ENCODE measurements at regions of chr7 and their contacts with region 1.

Region 1: GRCh38 chr7:131107337-131108211 is 220.1 kb upstream of the MKLN1 start:
- DNase-seq: peak; percentile 92
- H3K4me3 ChIP-seq: peak overlapping the region; percentile 61 to 79 (median 63)
- H3K27ac ChIP-seq: peak overlapping the region; percentile 98
- H3K4me1 ChIP-seq: peaks cover 41% of the 10 kb centered on the region
- H3K27me3 ChIP-seq: no peaks in the 10 kb centered on the region
- CTCF ChIP-seq: no peak
- POLR2A ChIP-seq: no peak

Region 2: DNA sequence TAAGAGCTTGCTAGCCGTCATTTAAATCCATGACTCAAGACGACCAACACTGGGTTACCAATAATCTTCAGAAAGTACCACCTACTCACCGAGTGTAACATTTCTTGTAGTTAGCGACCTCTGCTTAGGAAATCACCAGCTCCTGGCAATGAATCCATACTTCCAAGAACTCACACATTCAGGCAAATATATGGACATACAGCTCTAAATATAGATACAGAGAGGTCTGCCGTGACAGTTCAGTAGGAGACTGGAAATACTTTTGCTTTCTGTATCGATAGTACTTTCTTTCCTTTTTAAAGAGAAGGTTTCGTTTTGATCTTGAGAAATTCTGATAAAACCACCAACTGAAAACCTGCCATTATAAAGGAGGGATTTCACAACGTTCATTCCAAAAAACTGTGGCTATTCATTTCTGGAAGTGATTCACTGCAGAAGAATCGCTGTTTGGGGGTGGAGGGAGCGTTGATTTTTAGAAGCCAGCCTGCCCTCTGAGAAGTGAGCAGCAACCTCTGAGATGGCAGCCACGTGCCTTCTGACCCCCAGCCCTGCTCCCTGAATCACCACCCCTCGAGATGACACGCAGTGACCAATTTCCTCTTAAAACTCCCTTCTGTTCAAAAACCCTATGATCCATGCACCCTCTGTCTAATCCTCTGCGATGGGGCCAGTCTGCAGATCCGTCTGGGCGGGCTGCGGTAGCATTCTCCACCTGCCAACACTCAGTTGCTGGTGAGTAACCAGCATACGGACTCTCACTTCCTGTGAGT is 194.5 kb before region 1 on chr7:
- CTCF ChIA-PET with region 1: no interaction called
- POLR2A ChIA-PET with region 1: no interaction called
- dilution Hi-C with region 1: no loop called
- intact Hi-C with region 1: loop called (anchors 5 kb)
- DNase-seq: peak; percentile 97
- H3K4me3 ChIP-seq: peak overlapping the region; percentile 51 to 99 (median 88)
- H3K27ac ChIP-seq: peak overlapping the region; percentile 100
- H3K4me1 ChIP-seq: peaks cover 60% of the 10 kb centered on the region
- H3K27me3 ChIP-seq: no peaks in the 10 kb centered on the region
- CTCF ChIP-seq: no peak
- POLR2A ChIP-seq: peak; percentile 48

Region 3: DNA sequence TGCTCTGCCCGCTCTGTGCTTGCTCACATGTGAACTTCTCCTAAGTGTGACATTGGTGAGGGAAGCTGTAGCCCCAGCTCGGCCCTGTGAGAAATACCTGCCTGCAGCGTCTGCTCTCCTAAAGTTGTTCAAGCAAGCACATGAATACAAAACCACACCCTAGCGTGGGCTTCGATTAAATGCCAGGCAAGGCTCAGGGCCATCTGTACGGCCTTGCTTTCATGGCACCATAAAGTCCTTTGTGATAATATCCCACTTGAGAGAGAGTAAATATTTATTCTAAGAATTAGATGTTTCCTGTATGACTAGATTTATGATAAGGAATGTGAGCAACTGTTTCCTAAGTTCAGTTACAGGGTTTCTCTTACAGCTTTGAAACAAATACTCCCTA is 110.7 kb before region 1 on chr7:
- CTCF ChIA-PET with region 1: no interaction called
- POLR2A ChIA-PET with region 1: no interaction called
- dilution Hi-C with region 1: no loop called
- intact Hi-C with region 1: no loop called
- DNase-seq: peak; percentile 78
- H3K4me3 ChIP-seq: no peak overlapping the region
- H3K27ac ChIP-seq: no peak overlapping the region
- H3K4me1 ChIP-seq: peaks cover 14% of the 10 kb centered on the region
- H3K27me3 ChIP-seq: peaks cover 14 to 26% of the 10 kb centered on the region in 2 experiments
- CTCF ChIP-seq: no peak
- POLR2A ChIP-seq: no peak

Region 4: DNA sequence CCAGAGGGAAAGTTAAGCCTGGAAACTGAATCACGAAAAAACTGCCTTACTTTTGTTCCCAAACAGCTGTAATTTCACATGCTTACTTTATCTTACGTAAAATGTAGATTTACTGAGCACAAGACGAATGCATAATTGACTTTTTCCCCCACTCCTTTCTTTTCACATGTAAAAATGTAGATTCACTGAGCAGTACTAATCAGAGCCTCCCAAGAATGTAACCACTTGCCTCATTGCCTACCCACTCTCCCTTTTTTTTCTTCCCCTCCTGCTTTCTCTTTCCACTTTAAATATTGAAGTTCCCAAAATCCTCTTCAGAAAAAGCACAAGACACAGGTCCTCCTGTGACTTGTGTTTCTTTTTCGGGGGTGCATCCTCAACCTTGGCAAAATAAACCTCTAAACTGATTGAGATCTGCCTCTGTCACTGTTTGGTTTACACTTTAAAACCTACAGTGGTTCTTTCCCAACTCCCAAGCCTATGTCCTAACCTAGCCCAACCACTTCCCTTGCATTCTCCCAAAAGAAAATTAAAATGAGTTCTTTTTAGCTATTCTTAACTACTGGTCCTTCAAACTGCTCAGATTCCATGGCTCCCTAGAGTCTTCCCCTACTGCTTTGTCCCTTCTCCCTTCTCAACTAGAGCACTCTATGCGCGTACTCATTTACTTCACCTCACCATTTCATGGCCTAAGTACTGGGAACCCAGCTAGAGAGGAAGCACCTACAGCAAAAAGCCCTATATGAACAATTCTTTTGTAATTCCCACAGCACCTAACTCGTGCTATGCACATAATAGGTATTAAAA is 16.5 kb before region 1 on chr7:
- CTCF ChIA-PET with region 1: no interaction called
- POLR2A ChIA-PET with region 1: no interaction called
- dilution Hi-C with region 1: no loop called
- intact Hi-C with region 1: no loop called
- DNase-seq: no peak
- H3K4me3 ChIP-seq: no peak overlapping the region
- H3K27ac ChIP-seq: no peak overlapping the region
- H3K4me1 ChIP-seq: no peaks in the 10 kb centered on the region
- H3K27me3 ChIP-seq: no peaks in the 10 kb centered on the region
- CTCF ChIP-seq: no peak
- POLR2A ChIP-seq: no peak

Region 5: GRCh38 chr7:131255242-131255641 is 147.7 kb after region 1 on chr7:
- CTCF ChIA-PET with region 1: no interaction called
- POLR2A ChIA-PET with region 1: no interaction called
- dilution Hi-C with region 1: no loop called
- intact Hi-C with region 1: no loop called
- DNase-seq: no peak
- H3K4me3 ChIP-seq: no peak overlapping the region
- H3K27ac ChIP-seq: no peak overlapping the region
- H3K4me1 ChIP-seq: peaks cover 8% of the 10 kb centered on the region
- H3K27me3 ChIP-seq: peaks cover 3% of the 10 kb centered on the region in 2 experiments
- CTCF ChIP-seq: no peak
- POLR2A ChIP-seq: no peak

Region 6: DNA sequence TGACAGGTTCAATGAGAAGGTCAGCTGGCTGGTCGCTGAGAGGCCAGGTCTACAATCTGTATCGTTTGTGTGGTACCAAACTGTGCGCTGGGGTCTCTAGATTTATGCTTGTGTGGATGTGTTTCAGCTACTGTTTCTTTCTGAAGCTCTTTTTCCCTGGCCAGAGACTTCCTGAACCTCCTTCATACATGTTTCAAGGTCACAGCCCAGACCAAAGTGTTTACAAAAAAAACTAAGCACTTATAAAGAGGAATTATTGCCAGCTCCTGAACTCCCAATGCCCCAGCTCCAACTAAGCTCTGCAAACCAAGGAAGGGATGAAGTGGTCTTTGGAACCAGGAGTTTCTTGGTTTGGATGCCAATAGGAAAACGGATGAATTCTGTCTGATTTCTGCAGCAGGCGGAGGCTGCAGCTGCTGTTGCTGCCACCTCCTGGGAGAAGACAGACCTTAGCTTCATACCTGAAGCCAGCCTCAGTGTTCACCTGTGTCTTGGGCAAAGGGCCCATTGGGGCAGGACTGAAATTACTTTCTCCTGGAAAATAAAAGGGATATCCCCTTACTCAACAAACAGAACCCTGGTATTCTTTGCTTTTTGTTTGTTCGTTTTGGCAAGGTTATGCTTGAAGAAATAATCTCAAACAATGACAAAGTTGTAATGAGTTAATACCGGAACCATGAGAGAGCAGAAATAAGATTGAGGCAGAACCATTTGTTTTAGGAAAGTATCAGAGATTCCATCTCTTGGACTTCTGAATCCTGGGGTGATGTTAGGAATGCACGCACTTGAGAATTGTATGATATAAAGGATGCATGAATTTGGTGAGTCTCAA is 195.5 kb after region 1 on chr7:
- CTCF ChIA-PET with region 1: interaction called, 12 read pairs
- POLR2A ChIA-PET with region 1: no interaction called
- dilution Hi-C with region 1: no loop called
- intact Hi-C with region 1: no loop called
- DNase-seq: peak; percentile 33
- H3K4me3 ChIP-seq: no peak overlapping the region
- H3K27ac ChIP-seq: no peak overlapping the region
- H3K4me1 ChIP-seq: no peaks in the 10 kb centered on the region
- H3K27me3 ChIP-seq: no peaks in the 10 kb centered on the region
- CTCF ChIP-seq: peak; percentile 20 to 42
- POLR2A ChIP-seq: no peak

Region 7: DNA sequence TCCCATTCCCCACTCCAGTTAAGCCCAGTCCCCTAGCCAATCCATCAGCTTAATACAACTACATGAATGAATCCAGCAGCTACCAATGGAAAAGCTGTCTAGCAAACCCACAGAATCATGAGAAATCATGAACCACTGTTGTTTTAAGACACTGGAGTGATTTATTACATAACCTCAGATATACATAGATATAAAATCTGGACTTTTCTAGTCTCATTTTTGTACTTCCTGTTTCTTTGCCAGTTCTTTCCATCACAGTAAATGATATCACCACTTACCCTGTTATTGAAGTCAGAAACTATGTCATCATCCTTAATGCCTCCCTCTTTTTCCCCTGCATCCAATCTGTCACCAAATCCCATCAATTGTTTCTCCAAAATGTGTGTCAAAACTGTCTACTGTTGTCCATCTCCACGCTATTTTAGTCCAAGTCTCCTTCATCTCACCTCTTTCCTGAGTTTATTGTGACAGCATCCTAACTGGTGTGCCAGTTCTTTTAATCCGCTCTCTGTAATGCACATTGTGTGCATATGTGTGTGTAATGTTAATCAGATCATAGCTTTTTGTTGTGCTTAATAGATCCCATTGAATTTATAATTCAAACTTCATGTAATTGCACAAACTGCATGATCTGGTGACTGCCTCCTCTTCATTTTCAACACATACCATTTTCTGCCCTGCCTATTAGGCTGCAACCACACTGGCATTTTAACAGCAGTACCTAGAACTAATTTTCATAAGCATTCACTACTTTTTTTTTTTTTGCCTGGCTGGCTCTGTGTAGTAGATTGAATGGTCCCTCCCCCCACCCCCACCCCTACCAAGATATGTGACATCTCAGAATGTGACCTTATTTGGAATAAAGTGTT is 276.1 kb after region 1 on chr7:
- CTCF ChIA-PET with region 1: no interaction called
- POLR2A ChIA-PET with region 1: no interaction called
- dilution Hi-C with region 1: no loop called
- intact Hi-C with region 1: no loop called
- DNase-seq: peak; percentile 37
- H3K4me3 ChIP-seq: no peak overlapping the region
- H3K27ac ChIP-seq: no peak overlapping the region
- H3K4me1 ChIP-seq: no peaks in the 10 kb centered on the region
- H3K27me3 ChIP-seq: no peaks in the 10 kb centered on the region
- CTCF ChIP-seq: no peak
- POLR2A ChIP-seq: no peak

Region 8: DNA sequence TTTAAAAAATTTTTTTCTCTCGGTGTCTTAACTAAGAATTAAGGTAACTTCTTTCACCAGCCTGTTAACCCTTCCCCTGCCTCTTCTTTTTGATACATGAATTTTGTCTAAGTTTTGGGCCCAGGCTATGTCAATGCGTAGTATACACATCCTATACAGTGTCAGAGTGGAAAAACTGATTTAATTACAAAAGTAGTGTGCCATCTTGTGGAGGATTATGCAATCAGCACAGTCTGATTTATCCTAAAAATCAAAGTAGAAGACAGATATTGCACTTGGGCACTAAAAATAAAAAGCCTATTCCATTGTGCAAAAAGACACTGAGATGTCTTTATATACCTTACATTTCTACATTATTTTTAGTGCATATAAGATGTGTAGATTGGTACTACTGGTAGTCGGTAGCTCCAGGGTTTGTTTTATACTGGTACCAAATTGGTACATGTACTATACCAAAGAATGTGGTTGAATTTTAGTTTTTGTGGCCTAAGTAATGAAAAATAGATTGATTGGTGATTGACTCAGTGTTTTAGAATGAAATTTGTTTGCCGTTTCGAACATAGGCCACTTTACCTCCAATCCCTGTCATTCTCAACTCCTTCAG is 316.7 kb after region 1 on chr7:
- CTCF ChIA-PET with region 1: interaction called, 13 read pairs
- POLR2A ChIA-PET with region 1: no interaction called
- dilution Hi-C with region 1: no loop called
- intact Hi-C with region 1: loop called (anchors 1 kb)
- DNase-seq: peak; percentile 66
- H3K4me3 ChIP-seq: no peak overlapping the region
- H3K27ac ChIP-seq: no peak overlapping the region
- H3K4me1 ChIP-seq: no peaks in the 10 kb centered on the region
- H3K27me3 ChIP-seq: no peaks in the 10 kb centered on the region
- CTCF ChIP-seq: peak; percentile 39 to 43
- POLR2A ChIP-seq: no peak

Region 9: DNA sequence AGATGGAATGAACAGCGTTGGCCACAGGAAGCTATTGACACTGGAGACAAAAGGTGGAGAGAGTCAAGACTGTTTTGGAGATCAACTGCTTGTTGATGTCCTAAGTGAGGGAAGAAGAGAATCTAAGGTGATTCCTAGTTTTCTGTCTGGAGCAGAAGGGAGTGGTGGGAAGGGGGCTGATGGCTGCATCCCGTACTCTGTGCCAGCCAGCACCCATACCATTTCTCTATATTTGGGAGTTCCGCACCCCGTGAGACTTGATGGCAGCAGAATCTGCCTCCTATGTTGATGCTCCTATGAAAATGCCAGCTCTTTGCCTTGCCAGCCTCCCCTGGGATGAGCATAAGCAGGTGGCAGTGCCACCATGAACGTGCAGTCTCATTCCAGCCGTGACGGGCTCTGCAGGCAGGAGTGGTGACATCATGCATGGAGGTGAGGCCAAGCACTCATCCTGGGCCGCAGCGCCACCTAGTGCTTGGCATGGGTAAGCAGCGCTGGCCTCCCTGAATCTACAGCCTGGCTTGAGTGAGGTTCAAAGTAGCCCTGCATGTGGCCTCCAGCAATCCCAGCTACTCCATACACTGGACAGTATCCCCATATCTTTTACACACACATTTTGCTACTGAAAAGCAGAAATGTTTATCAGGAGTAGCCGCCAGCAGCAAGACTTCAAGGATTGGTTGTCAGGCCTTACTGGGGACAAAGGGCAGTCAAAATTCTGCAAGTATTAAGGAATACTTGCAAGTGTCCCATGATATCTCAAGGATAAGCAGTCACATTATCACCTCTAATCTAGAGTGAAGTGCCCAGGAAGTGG is 405.9 kb after region 1 on chr7:
- CTCF ChIA-PET with region 1: no interaction called
- POLR2A ChIA-PET with region 1: no interaction called
- dilution Hi-C with region 1: no loop called
- intact Hi-C with region 1: loop called (anchors 5 kb)
- DNase-seq: peak; percentile 88
- H3K4me3 ChIP-seq: no peak overlapping the region
- H3K27ac ChIP-seq: peak overlapping the region; percentile 67
- H3K4me1 ChIP-seq: peaks cover 21% of the 10 kb centered on the region
- H3K27me3 ChIP-seq: no peaks in the 10 kb centered on the region
- CTCF ChIP-seq: peak; percentile 97 to 100
- POLR2A ChIP-seq: no peak

Region 10: GRCh38 chr7:131654668-131655326 is 547.2 kb after region 1 on chr7:
- CTCF ChIA-PET with region 1: no interaction called
- POLR2A ChIA-PET with region 1: no interaction called
- dilution Hi-C with region 1: no loop called
- intact Hi-C with region 1: loop called (anchors 5 kb)
- DNase-seq: peak; percentile 75
- H3K4me3 ChIP-seq: no peak overlapping the region
- H3K27ac ChIP-seq: no peak overlapping the region
- H3K4me1 ChIP-seq: peaks cover 20% of the 10 kb centered on the region
- H3K27me3 ChIP-seq: no peaks in the 10 kb centered on the region
- CTCF ChIP-seq: peak; percentile 92 to 97
- POLR2A ChIP-seq: no peak